ENCODE measurements at regions of chr4 and their contacts with region 1.

Region 1: GRCh38 chr4:44760142-44760898 is 34.0 kb upstream of the GNPDA2 start:
- DNase-seq: peak; percentile 9
- H3K4me3 Mint-ChIP-seq: no peak overlapping the region
- H3K27ac Mint-ChIP-seq: no peak overlapping the region
- H3K4me1 Mint-ChIP-seq: no peaks in the 10 kb centered on the region
- H3K27me3 Mint-ChIP-seq: no peaks in the 10 kb centered on the region
- CTCF ChIP-seq: peak; percentile 24

Region 2: DNA sequence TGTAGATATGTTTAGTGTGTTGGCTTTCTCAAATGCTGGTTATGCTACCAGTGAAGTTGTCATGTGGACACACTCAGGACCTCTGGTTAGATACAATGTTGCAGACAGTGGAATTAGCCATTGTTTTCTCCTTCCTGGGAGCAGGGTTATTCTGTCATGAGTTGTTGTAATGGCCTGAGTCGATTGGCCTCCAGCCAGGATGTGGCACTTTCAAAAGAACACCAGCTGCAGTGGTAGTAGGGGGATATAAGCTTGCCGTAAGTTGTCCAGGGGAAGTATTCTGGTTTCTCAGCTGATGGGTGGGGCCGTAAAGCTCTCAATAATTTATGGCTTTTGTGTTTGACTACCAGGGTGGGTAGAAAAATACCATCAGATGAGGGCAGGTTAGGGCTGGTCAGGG is 663.6 kb after region 1 on chr4:
- CTCF ChIA-PET with region 1: no interaction called
- intact Hi-C with region 1: no loop called
- DNase-seq: no peak
- H3K4me3 Mint-ChIP-seq: no peak overlapping the region
- H3K27ac Mint-ChIP-seq: no peak overlapping the region
- H3K4me1 Mint-ChIP-seq: no peaks in the 10 kb centered on the region
- H3K27me3 Mint-ChIP-seq: no peaks in the 10 kb centered on the region
- CTCF ChIP-seq: no peak

Region 3: GRCh38 chr4:45442466-45442865 is 682.1 kb after region 1 on chr4:
- CTCF ChIA-PET with region 1: no interaction called
- intact Hi-C with region 1: loop called (anchors 5 kb)
- DNase-seq: no peak
- H3K4me3 Mint-ChIP-seq: no peak overlapping the region
- H3K27ac Mint-ChIP-seq: no peak overlapping the region
- H3K4me1 Mint-ChIP-seq: no peaks in the 10 kb centered on the region
- H3K27me3 Mint-ChIP-seq: no peaks in the 10 kb centered on the region
- CTCF ChIP-seq: peak; percentile 18

Measured in Calu3 (cell line).